ENCODE measurements at regions of chr12 and their contacts with region 1.

Region 1: GRCh38 chr12:18139989-18140596 is 50.1 kb upstream of the RERGL start:
- DNase-seq: no peak
- H3K4me3 ChIP-seq: no peak overlapping the region
- H3K27ac ChIP-seq: no peak overlapping the region
- H3K4me1 ChIP-seq: no peaks in the 10 kb centered on the region
- H3K27me3 ChIP-seq: no peaks in the 10 kb centered on the region
- CTCF ChIP-seq: peak; percentile 55

Region 2: GRCh38 chr12:17372508-17372907 is 767.6 kb before region 1 on chr12:
- intact Hi-C with region 1: no loop called
- DNase-seq: no peak
- H3K4me3 ChIP-seq: no peak overlapping the region
- H3K27ac ChIP-seq: no peak overlapping the region
- H3K4me1 ChIP-seq: no peaks in the 10 kb centered on the region
- H3K27me3 ChIP-seq: no peaks in the 10 kb centered on the region
- CTCF ChIP-seq: no peak

Region 3: DNA sequence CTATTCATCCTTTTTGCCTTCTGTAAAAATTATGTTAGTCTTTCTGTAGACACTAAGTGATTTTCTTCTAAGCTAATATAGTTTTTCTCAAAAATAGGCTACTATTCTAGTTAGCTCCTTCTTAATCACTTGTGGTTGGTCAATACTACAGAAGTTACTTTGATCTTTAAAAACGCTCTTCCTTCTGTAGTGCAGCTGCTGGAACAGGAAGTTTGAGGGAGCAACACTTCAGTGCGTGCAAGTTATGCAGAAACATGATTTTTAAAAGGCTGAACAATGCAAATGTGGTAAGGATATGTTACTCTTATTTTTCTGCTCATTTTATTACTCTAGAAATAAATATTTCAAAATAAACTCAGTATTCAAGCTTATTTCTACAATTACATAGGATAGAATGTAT is 39.0 kb before region 1 on chr12:
- intact Hi-C with region 1: no loop called
- DNase-seq: no peak
- H3K4me3 ChIP-seq: no peak overlapping the region
- H3K27ac ChIP-seq: no peak overlapping the region
- H3K4me1 ChIP-seq: no peaks in the 10 kb centered on the region
- H3K27me3 ChIP-seq: no peaks in the 10 kb centered on the region
- CTCF ChIP-seq: no peak

Region 4: GRCh38 chr12:18224745-18225144 is 84.7 kb after region 1 on chr12:
- intact Hi-C with region 1: loop called (anchors 5 kb)
- DNase-seq: no peak
- H3K4me3 ChIP-seq: no peak overlapping the region
- H3K27ac ChIP-seq: no peak overlapping the region
- H3K4me1 ChIP-seq: no peaks in the 10 kb centered on the region
- H3K27me3 ChIP-seq: no peaks in the 10 kb centered on the region
- CTCF ChIP-seq: peak; percentile 22

Measured in colonic mucosa (tissue), 4 donors.